GM12878 (cell line): ENCODE measurements at regions of chr11 and their contacts with region 1.

Region 1: GRCh38 chr11:64688534-64688982 is 34.4 kb downstream of the NRXN2 start:
- DNase-seq: peak; percentile 46
- ATAC-seq: peak; percentile 99
- H3K4me3 ChIP-seq: no peak overlapping the region; the same call in 1 of the 2 replicates
- H3K27ac ChIP-seq: no peak overlapping the region
- H3K4me1 ChIP-seq: 0 out of 2 replicates have a peak, but pooled peaks cover 3% of the 10 kb centered on the region
- H3K27me3 ChIP-seq: no peaks in the 10 kb centered on the region; a peak in 1 of 4 replicates
- CTCF ChIP-seq: peak; percentile 83 to 92 (median 92)
- EP300 ChIP-seq: no peak
- POLR2A ChIP-seq: no peak
- RAD21 ChIP-seq: peak; percentile 69

Region 2: GRCh38 chr11:64659417-64660144 is 29.0 kb before region 1 on chr11:
- CTCF ChIA-PET with region 1: interaction called, 128 read pairs
- POLR2A ChIA-PET with region 1: no interaction called
- RAD21 ChIA-PET with region 1: interaction called, 10 read pairs
- SMC1A ChIA-PET with region 1: interaction called, 7 read pairs
- in situ Hi-C with region 1: no loop called
- intact Hi-C with region 1: no loop called
- DNase-seq: no peak
- ATAC-seq: peak; percentile 30; the same call in 1 of the 3 replicates
- H3K4me3 ChIP-seq: no peak overlapping the region
- H3K27ac ChIP-seq: no peak overlapping the region
- H3K4me1 ChIP-seq: peaks cover 9% of the 10 kb centered on the region
- H3K27me3 ChIP-seq: no peaks in the 10 kb centered on the region
- CTCF ChIP-seq: no peak
- EP300 ChIP-seq: no peak
- POLR2A ChIP-seq: no peak
- RAD21 ChIP-seq: no peak

Region 3: GRCh38 chr11:64703048-64703447 is 14.5 kb after region 1 on chr11:
- CTCF ChIA-PET with region 1: interaction called, 56 read pairs
- POLR2A ChIA-PET with region 1: interaction called, 3 read pairs
- RAD21 ChIA-PET with region 1: interaction called, 18 read pairs
- SMC1A ChIA-PET with region 1: interaction called, 40 read pairs
- in situ Hi-C with region 1: no loop called
- intact Hi-C with region 1: no loop called
- DNase-seq: no peak
- ATAC-seq: no peak
- H3K4me3 ChIP-seq: no peak overlapping the region
- H3K27ac ChIP-seq: no peak overlapping the region
- H3K4me1 ChIP-seq: no peaks in the 10 kb centered on the region
- H3K27me3 ChIP-seq: peaks cover 0 to 2% of the 10 kb centered on the region in 2 experiments; a peak in 2 of 4 replicates
- CTCF ChIP-seq: no peak
- EP300 ChIP-seq: no peak
- POLR2A ChIP-seq: no peak
- RAD21 ChIP-seq: no peak

Region 4: DNA sequence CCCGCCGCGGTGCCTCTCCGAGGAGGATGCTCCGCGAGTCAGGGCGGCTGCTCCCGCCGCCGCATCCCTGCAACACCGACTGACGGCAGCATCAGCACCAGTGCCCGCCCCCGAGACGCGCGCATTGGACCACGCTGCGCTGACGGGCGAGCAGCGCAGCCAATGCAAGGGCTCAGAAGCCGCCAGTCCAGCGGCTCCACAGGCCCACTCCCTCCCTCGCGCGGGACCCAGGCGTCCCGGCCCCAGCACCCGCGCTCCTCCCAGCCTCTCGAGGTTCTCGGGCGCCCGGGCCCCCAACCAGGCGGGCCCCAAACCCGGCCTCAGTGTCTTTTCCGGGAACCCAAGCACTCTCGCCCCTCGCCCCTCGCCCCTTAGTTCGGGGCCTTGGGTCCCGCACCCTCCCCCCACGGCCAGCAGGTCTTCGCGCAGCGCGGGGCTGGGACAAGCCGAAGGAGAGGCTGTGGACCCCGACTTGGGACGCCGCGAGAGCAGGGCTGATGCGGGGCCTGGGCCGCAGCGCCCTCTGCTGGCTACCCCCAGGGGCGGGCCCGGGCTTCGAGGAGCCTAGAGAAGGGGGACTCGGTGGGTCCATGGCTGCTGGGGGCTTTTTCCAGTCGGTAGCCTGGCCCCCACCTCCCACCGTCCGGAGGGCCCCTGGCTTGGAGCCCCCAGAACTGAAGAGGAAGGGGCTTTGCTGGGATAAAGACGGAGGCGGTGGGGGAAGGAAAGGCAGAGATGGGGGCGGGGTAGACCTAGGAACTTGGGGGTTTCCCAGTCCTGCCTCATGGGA is 34.8 kb after region 1 on chr11 and contains the start of gene NRXN2:
- CTCF ChIA-PET with region 1: interaction called, 58 read pairs
- POLR2A ChIA-PET with region 1: no interaction called
- RAD21 ChIA-PET with region 1: interaction called, 7 read pairs
- SMC1A ChIA-PET with region 1: interaction called, 5 read pairs
- in situ Hi-C with region 1: no loop called
- intact Hi-C with region 1: loop called (anchors 2 kb)
- DNase-seq: peak; percentile 48
- ATAC-seq: peak; percentile 99
- H3K4me3 ChIP-seq: peak within 1 kb of the TSS; percentile 97
- H3K27ac ChIP-seq: peak within 1 kb of the TSS; percentile 18
- H3K4me1 ChIP-seq: peaks cover 10% of the 10 kb centered on the region
- H3K27me3 ChIP-seq: peaks cover 3 to 9% of the 10 kb centered on the region in 2 experiments; a peak in 2 of 4 replicates
- CTCF ChIP-seq: peak; percentile 90 to 99 (median 95)
- EP300 ChIP-seq: no peak
- POLR2A ChIP-seq: peak; percentile 35
- RAD21 ChIP-seq: peak; percentile 60
- polyA plus RNA-seq, gene NRXN2: 0.03 to 0.07 TPM

Region 5: DNA sequence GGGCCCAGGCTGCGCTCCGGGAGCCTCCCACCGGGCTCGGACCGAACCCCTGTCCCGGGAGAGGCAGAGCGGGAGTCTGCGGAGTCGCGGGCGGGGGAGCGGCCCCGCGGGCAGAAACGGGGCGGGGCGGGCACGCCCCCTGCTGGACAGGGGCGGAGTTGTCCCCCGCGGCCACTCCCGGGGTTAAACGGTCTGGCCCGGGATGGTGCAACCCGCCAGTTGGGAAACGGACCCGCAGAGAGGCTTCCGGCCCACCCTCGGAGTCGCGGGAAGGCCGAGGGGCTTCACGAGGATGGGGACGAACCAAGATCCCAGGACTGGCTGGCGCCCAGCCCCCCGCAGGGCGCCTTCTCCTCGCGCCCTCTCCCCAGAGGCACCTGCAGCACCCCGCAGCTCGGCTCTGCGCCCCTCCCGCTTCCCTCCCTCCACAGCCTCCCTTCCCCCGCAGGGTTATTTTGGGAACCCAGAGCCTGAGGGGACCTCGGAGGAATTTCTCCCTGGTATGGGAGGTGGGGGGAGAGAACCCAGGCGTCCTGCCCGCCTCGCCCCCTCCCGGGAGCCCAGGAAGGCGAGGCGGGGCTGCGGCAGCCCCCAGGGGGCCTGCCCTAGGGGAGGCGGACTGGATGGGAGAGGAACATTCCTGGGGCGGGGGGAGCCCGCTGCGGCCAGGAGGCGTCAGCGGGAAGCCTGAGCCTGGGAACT is 54.5 kb after region 1 on chr11:
- CTCF ChIA-PET with region 1: interaction called, 86 read pairs
- POLR2A ChIA-PET with region 1: no interaction called
- RAD21 ChIA-PET with region 1: interaction called, 21 read pairs
- SMC1A ChIA-PET with region 1: interaction called, 15 read pairs
- in situ Hi-C with region 1: loop called (anchors 5 kb)
- intact Hi-C with region 1: loop called (anchors 1 kb)
- DNase-seq: no peak
- ATAC-seq: peak; percentile 70
- H3K4me3 ChIP-seq: peak overlapping the region; percentile 35
- H3K27ac ChIP-seq: no peak overlapping the region
- H3K4me1 ChIP-seq: peaks cover 29% of the 10 kb centered on the region
- H3K27me3 ChIP-seq: peaks cover 0 to 5% of the 10 kb centered on the region in 2 experiments; a peak in 3 of 4 replicates
- CTCF ChIP-seq: peak; percentile 69 to 93 (median 81)
- EP300 ChIP-seq: no peak
- POLR2A ChIP-seq: no peak
- RAD21 ChIP-seq: peak; percentile 62